WTC11 (cell line): ENCODE measurements at regions of chr18 and their contacts with region 1.

Region 1: GRCh38 chr18:13813271-13813849 is 10.6 kb upstream of the MC5R start:
- DNase-seq: peak; percentile 72
- ATAC-seq: peak; percentile 69
- H3K4me3 Mint-ChIP-seq: no peak overlapping the region
- H3K27ac Mint-ChIP-seq: no peak overlapping the region; the same call in 1 of the 2 replicates
- H3K4me1 Mint-ChIP-seq: peaks cover 50% of the 10 kb centered on the region
- H3K27me3 Mint-ChIP-seq: no peaks in the 10 kb centered on the region
- CTCF ChIP-seq: peak; percentile 56; the same call in 1 of the 2 replicates

Region 2: DNA sequence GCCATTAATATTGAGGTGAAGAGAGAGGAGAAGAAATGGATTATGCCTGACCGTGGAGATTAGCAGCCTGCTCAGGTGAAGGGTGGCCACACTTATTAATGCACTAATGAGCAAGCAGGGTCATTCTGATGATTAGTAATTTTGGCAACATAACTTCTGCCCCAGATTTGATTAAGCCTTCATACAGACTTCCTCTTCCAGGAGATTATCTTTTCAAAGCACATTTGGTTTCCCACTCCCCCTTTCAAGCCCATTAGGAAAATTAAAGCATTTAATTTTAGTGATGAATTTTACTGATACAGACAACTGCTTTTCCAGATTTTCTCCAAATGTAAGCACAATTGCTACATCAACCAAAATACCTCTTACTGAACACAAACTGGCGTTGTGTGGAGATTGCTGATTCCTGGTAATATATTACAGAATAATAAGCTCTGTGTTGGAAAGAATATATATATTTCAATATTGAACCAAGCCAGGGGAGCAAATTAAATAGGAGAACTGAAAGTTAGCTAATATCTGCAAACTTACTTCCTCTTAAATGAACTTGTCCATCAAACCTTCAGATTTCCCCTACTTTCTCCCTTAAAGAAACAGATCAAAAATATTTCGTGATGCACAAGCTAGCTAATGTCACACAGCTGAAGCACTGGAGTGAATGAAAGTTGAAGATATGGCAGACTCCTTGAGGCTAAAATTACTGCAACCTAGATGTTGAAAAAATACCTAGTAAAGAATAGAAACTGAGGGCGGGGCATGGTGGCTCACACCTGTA is 227.8 kb before region 1 on chr18:
- CTCF ChIA-PET with region 1: no interaction called
- POLR2A ChIA-PET with region 1: no interaction called
- DNase-seq: no peak
- ATAC-seq: no peak
- H3K4me3 Mint-ChIP-seq: no peak overlapping the region
- H3K27ac Mint-ChIP-seq: no peak overlapping the region
- H3K4me1 Mint-ChIP-seq: no peaks in the 10 kb centered on the region
- H3K27me3 Mint-ChIP-seq: no peaks in the 10 kb centered on the region
- CTCF ChIP-seq: no peak

Region 3: GRCh38 chr18:13823707-13824395 is 10.5 kb after region 1 on chr18 and contains the start of gene MC5R:
- CTCF ChIA-PET with region 1: interaction called, 68 read pairs
- POLR2A ChIA-PET with region 1: no interaction called
- DNase-seq: peak; percentile 82
- ATAC-seq: peak; percentile 96
- H3K4me3 Mint-ChIP-seq: peak within 1 kb of the TSS; percentile 58
- H3K27ac Mint-ChIP-seq: no peak within 1 kb of the TSS
- H3K4me1 Mint-ChIP-seq: no peaks in the 10 kb centered on the region
- H3K27me3 Mint-ChIP-seq: peaks cover 20% of the 10 kb centered on the region
- CTCF ChIP-seq: peak; percentile 86
- total RNA-seq, gene MC5R: 0.14 to 0.27 TPM (median 0.15 TPM) in 3 replicates

Region 4: GRCh38 chr18:13868501-13869271 is 55.3 kb after region 1 on chr18:
- CTCF ChIA-PET with region 1: interaction called, 18 read pairs
- POLR2A ChIA-PET with region 1: no interaction called
- DNase-seq: peak; percentile 41
- ATAC-seq: peak; percentile 49
- H3K4me3 Mint-ChIP-seq: peak overlapping the region; percentile 76
- H3K27ac Mint-ChIP-seq: no peak overlapping the region
- H3K4me1 Mint-ChIP-seq: peaks cover 14% of the 10 kb centered on the region
- H3K27me3 Mint-ChIP-seq: peaks cover 50% of the 10 kb centered on the region
- CTCF ChIP-seq: no peak

Region 5: GRCh38 chr18:14074187-14074586 is 260.8 kb after region 1 on chr18:
- CTCF ChIA-PET with region 1: interaction called, 28 read pairs
- POLR2A ChIA-PET with region 1: no interaction called
- DNase-seq: peak; percentile 38
- ATAC-seq: peak; percentile 97
- H3K4me3 Mint-ChIP-seq: no peak overlapping the region
- H3K27ac Mint-ChIP-seq: no peak overlapping the region
- H3K4me1 Mint-ChIP-seq: no peaks in the 10 kb centered on the region
- H3K27me3 Mint-ChIP-seq: no peaks in the 10 kb centered on the region
- CTCF ChIP-seq: peak; percentile 30; the same call in 1 of the 2 replicates